ENCODE measurements at regions of chr5 and their contacts with region 1.

Region 1: GRCh38 chr5:40679155-40679913 is 381 bp upstream of the PTGER4 start:
- DNase-seq: peak; percentile 86
- ATAC-seq: peak; percentile 77
- H3K4me3 ChIP-seq: peak overlapping the region; percentile 80 to 89 (median 84)
- H3K4me3 Mint-ChIP-seq: peak overlapping the region; percentile 94
- H3K27ac ChIP-seq: peak overlapping the region; percentile 89 to 96
- H3K27ac Mint-ChIP-seq: peak overlapping the region; percentile 92
- H3K4me1 ChIP-seq: peaks cover 28 to 39% of the 10 kb centered on the region in 2 donors
- H3K4me1 Mint-ChIP-seq: peaks cover 49% of the 10 kb centered on the region
- H3K27me3 ChIP-seq: no peaks in the 10 kb centered on the region
- H3K27me3 Mint-ChIP-seq: no peaks in the 10 kb centered on the region
- CTCF ChIP-seq: no peak

Region 2: DNA sequence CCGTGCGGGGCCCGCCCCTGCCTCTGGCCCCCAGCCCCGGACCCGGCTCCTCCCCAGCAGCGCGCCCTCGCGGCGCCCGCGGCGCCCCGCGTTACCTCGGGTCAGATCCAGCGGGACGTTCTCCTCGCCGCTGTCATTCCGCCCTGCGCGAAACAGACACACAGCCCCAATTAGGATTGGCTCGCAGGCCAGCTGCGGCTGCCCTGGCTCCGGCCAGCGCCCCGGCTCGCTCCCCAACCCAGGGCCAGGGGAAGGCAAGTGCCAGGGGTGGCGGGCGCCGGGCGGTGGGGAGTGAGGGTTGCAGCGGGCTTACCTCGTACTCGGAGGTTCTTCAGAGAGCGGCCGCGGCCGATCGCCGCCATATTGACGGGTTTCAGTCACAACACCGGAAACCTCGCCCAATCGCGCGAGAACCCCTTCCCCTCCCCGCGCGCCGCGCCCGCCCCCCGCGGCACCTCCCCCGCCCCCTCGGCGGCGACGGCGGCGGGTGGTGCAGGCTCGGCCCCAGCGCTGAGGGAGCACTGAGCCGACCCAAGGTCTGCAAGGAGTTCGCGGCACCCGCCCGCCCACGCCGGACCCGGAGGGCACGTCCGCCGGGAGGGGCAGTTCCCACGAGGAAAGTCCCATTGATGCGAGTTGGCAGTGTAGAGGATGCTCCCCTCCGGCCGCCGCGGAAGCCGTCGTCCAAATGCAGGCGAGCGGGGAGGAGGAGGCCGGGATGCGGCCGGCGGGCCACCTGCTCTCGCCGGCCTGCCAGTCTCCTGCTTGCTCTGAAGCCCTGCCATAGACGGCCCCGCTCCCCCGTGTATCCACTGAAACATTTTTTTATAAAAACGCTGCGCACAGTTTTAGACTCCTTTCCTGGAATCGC is 1605.1 kb before region 1 on chr5 and contains the start of gene RICTOR:
- CTCF ChIA-PET with region 1: no interaction called
- POLR2A ChIA-PET with region 1: no interaction called
- intact Hi-C with region 1: loop called (anchors 5 kb)
- DNase-seq: peak; percentile 92
- ATAC-seq: peak; percentile 79
- H3K4me3 ChIP-seq: peak within 1 kb of the TSS; percentile 75 to 95 (median 82)
- H3K4me3 Mint-ChIP-seq: peak within 1 kb of the TSS; percentile 99
- H3K27ac ChIP-seq: peak within 1 kb of the TSS; percentile 88 to 96
- H3K27ac Mint-ChIP-seq: peak within 1 kb of the TSS; percentile 99
- H3K4me1 ChIP-seq: peaks cover 22 to 39% of the 10 kb centered on the region in 2 donors
- H3K4me1 Mint-ChIP-seq: peaks cover 53% of the 10 kb centered on the region
- H3K27me3 ChIP-seq: no peaks in the 10 kb centered on the region
- H3K27me3 Mint-ChIP-seq: no peaks in the 10 kb centered on the region
- CTCF ChIP-seq: no peak
- total RNA-seq, gene RICTOR: 82.8 and 84.3 TPM in 2 replicates

Region 3: DNA sequence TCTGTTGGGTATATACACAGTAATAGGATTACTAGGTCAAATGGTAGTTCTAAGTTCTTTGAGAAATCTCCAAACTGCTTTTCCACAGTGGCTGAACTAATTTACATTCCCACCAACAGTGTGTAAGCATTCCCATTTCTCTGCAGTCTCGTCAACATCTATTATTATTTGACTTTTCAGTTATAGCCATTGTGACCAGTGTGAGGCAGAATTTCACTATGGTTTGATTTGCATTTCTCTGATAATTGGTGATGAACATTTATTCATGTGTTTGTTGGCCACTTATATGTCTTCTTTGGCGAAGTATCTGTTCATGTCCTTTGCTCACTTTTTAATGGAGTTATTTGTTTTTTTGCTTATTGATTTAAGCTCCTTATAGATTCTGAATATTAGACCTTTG is 658.3 kb before region 1 on chr5:
- CTCF ChIA-PET with region 1: interaction called, 92 read pairs
- POLR2A ChIA-PET with region 1: no interaction called
- intact Hi-C with region 1: no loop called
- DNase-seq: peak; percentile 50
- ATAC-seq: peak; percentile 57
- H3K4me3 ChIP-seq: no peak overlapping the region
- H3K4me3 Mint-ChIP-seq: no peak overlapping the region
- H3K27ac ChIP-seq: no peak overlapping the region
- H3K27ac Mint-ChIP-seq: no peak overlapping the region
- H3K4me1 ChIP-seq: peaks cover 5 to 6% of the 10 kb centered on the region in 2 donors
- H3K4me1 Mint-ChIP-seq: peaks cover 20% of the 10 kb centered on the region
- H3K27me3 ChIP-seq: no peaks in the 10 kb centered on the region
- H3K27me3 Mint-ChIP-seq: no peaks in the 10 kb centered on the region
- CTCF ChIP-seq: peak; percentile 57

Region 4: DNA sequence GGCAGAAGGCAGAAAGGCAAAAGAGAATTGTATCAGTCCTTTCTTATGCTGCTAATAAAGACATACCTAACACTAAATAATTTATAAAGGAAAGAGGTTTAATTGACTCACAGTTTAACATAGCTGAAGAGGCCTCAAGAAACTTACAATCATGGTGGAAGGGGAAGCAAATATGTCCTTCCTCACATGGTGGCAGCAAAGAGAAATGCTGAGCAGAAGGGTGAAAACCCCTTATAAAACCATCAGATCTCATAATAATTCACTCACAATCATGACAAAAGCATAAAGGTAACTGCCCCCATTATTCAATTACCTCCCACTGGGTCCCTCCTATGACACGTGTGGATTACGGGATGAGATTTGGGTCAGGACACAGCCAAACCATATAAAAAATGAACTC is 312.1 kb before region 1 on chr5:
- CTCF ChIA-PET with region 1: interaction called, 14 read pairs
- POLR2A ChIA-PET with region 1: no interaction called
- intact Hi-C with region 1: no loop called
- DNase-seq: peak; percentile 45
- ATAC-seq: no peak
- H3K4me3 ChIP-seq: no peak overlapping the region
- H3K4me3 Mint-ChIP-seq: no peak overlapping the region
- H3K27ac ChIP-seq: no peak overlapping the region
- H3K27ac Mint-ChIP-seq: peak overlapping the region; percentile 23
- H3K4me1 ChIP-seq: peaks cover 3 to 4% of the 10 kb centered on the region in 2 donors
- H3K4me1 Mint-ChIP-seq: peaks cover 11% of the 10 kb centered on the region
- H3K27me3 ChIP-seq: no peaks in the 10 kb centered on the region
- H3K27me3 Mint-ChIP-seq: no peaks in the 10 kb centered on the region
- CTCF ChIP-seq: no peak

Region 5: DNA sequence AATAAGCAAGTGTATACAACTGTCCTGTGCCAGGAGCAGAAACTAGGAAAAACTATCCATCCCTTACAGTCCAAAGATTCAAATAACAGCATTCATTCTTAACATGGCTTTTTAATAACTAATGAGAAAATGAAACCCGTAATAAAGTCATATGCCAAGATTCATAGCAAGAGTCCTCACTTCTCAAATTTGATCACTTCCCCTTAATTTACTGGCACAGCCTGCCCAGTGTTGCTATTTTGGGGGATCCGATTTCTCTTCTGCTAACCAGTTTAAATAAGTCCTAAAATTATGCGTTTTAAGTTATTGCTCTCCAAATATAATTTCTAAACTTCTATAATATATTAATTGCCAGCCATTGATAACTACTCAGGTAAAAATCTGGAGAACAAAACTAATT is 176.6 kb before region 1 on chr5:
- CTCF ChIA-PET with region 1: no interaction called
- POLR2A ChIA-PET with region 1: no interaction called
- intact Hi-C with region 1: loop called (anchors 5 kb)
- DNase-seq: peak; percentile 67
- ATAC-seq: peak; percentile 68
- H3K4me3 ChIP-seq: peak overlapping the region in 3 of 5 experiments; percentile 12 to 51 (median 30)
- H3K4me3 Mint-ChIP-seq: no peak overlapping the region
- H3K27ac ChIP-seq: peak overlapping the region in 1 of 2 donors; percentile 60
- H3K27ac Mint-ChIP-seq: no peak overlapping the region
- H3K4me1 ChIP-seq: peaks cover 14 to 17% of the 10 kb centered on the region in 2 donors
- H3K4me1 Mint-ChIP-seq: peaks cover 6% of the 10 kb centered on the region
- H3K27me3 ChIP-seq: no peaks in the 10 kb centered on the region
- H3K27me3 Mint-ChIP-seq: no peaks in the 10 kb centered on the region
- CTCF ChIP-seq: no peak

Region 6: GRCh38 chr5:40594811-40595210 is 84.5 kb before region 1 on chr5:
- CTCF ChIA-PET with region 1: interaction called, 3 read pairs
- POLR2A ChIA-PET with region 1: no interaction called
- intact Hi-C with region 1: loop called (anchors 5 kb)
- DNase-seq: no peak
- ATAC-seq: no peak
- H3K4me3 ChIP-seq: no peak overlapping the region
- H3K4me3 Mint-ChIP-seq: no peak overlapping the region
- H3K27ac ChIP-seq: no peak overlapping the region
- H3K27ac Mint-ChIP-seq: no peak overlapping the region
- H3K4me1 ChIP-seq: peaks cover 19 to 21% of the 10 kb centered on the region in 2 donors
- H3K4me1 Mint-ChIP-seq: peaks cover 28% of the 10 kb centered on the region
- H3K27me3 ChIP-seq: no peaks in the 10 kb centered on the region
- H3K27me3 Mint-ChIP-seq: no peaks in the 10 kb centered on the region
- CTCF ChIP-seq: no peak

Region 7: DNA sequence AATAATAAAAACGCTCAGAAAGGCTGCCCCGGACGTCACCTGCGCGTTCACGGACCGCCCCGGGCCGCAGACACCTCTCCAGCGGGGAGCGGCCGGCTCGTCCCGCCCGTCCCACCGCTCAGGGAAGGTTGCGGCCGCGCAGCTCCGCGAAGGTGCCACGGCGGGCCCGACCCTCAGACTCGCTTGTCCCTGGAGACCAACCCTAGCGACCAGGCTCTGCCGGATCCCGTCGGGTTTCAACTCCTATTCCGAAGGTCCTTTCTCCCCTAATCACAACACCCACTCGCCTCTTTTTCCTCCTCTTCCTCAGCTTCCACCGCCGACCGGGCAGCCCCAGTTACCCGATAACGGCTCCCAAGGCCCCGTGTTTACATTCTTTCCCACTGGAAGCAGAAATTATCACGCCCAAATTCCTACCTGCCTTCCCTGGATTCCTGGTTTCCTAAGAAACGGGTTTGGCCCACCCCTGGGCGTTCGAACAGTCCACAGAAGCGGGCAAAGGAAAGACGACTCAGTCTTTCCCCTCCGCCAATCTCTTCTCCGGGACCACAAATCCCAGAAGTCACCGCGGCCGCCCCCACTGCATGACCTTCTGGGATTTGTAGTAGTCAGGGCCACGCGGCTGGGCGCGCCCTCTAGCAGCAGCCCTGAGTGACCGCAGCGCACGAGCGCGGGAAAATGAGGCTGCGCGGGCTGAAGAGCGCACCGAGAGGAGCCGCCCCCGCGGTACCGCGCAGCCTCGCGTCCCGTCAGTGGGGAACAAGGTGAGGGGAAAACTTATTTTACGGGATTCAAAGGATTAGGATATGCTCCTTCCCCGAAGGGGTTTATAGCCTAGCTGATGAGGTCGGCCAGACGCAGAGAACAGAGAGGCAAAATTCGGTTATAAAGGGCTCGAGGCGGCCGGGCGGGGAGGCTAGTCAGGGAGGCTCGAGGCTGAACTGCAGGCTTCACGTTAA is 76.4 kb after region 1 on chr5 and contains the start of gene TTC33:
- CTCF ChIA-PET with region 1: no interaction called
- POLR2A ChIA-PET with region 1: interaction called, 5 read pairs
- intact Hi-C with region 1: loop called (anchors 2 kb)
- DNase-seq: peak; percentile 92
- ATAC-seq: peak; percentile 94
- H3K4me3 ChIP-seq: peak within 1 kb of the TSS; percentile 78 to 100 (median 95)
- H3K4me3 Mint-ChIP-seq: no peak within 1 kb of the TSS
- H3K27ac ChIP-seq: peak within 1 kb of the TSS; percentile 77 to 92
- H3K27ac Mint-ChIP-seq: no peak within 1 kb of the TSS
- H3K4me1 ChIP-seq: peaks cover 10 to 13% of the 10 kb centered on the region in 2 donors
- H3K4me1 Mint-ChIP-seq: peaks cover 16% of the 10 kb centered on the region
- H3K27me3 ChIP-seq: no peaks in the 10 kb centered on the region
- H3K27me3 Mint-ChIP-seq: no peaks in the 10 kb centered on the region
- CTCF ChIP-seq: peak; percentile 63
- total RNA-seq, gene TTC33: 15.8 and 18.2 TPM in 2 replicates

Measured in B cell (primary cell).